Aorta (tissue), 5 donors: ENCODE measurements at regions of chr16 and their contacts with region 1.

Region 1: DNA sequence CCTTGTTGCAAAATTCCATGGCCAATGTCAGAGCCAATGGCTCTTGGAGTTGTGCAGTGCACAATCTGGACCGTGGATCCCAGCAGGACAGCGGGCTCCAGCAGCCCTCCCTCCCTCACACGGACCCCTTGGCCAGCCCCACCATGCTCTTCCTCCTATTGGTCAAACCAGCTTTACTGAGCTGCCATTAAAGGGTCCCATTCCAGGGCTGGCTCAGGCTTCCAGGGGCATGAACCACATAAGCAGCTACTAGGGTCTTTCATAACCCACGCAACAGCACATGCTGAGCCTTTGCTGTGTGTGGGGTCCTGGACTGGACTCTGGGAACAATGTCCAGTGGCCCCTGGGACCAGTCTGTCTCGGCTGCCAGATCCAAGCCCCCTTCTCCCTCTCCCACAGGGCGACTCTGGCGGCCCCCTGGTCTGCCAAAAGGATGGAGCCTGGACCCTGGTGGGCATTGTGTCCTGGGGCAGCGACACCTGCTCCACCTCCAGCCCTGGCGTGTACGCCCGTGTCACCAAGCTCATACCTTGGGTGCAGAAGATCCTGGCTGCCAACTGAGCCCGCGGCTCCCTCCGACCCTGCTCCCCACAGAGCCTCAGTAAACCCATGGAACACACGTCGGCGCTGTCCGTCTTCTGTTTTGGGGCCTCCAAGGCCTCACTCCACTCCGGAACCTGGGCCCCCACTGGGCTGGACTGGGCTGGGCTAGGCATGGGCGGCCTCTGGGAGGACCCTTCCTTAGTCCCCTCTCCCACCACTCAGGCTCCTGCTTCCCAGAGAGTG is 5.7 kb downstream of the CTRB1 start:
- DNase-seq: no peak
- ATAC-seq: no peak
- H3K4me3 ChIP-seq: no peak overlapping the region
- H3K27ac ChIP-seq: no peak overlapping the region
- H3K4me1 ChIP-seq: no peaks in the 10 kb centered on the region
- H3K27me3 ChIP-seq: no peaks in the 10 kb centered on the region

Region 2: GRCh38 chr16:75206749-75207451 is 17.6 kb before region 1 on chr16 and contains the start of gene CTRB2:
- intact Hi-C with region 1: loop called (anchors 2 kb)
- DNase-seq: peak; percentile 34 to 74
- ATAC-seq: peak; percentile 24
- H3K4me3 ChIP-seq: no peak within 1 kb of the TSS
- H3K27ac ChIP-seq: no peak within 1 kb of the TSS
- H3K4me1 ChIP-seq: no peaks in the 10 kb centered on the region
- H3K27me3 ChIP-seq: no peaks in the 10 kb centered on the region
- total RNA-seq, gene CTRB2: 9.1 to 11.6 TPM